Psoas muscle (tissue), 8 donors: ENCODE measurements at regions of chr11 and their contacts with region 1.

Region 1: GRCh38 chr11:30128269-30128932 is 102.4 kb upstream of the FSHB start:
- DNase-seq: no peak
- ATAC-seq: no peak
- H3K4me3 ChIP-seq: no peak overlapping the region
- H3K27ac ChIP-seq: no peak overlapping the region
- H3K4me1 ChIP-seq: no peaks in the 10 kb centered on the region
- H3K27me3 ChIP-seq: no peaks in the 10 kb centered on the region
- CTCF ChIP-seq: peak; percentile 40

Region 2: GRCh38 chr11:29780756-29781155 is 347.6 kb before region 1 on chr11:
- intact Hi-C with region 1: no loop called
- DNase-seq: no peak
- ATAC-seq: no peak
- H3K4me3 ChIP-seq: no peak overlapping the region
- H3K27ac ChIP-seq: no peak overlapping the region
- H3K4me1 ChIP-seq: no peaks in the 10 kb centered on the region
- H3K27me3 ChIP-seq: no peaks in the 10 kb centered on the region
- CTCF ChIP-seq: no peak

Region 3: GRCh38 chr11:30059172-30059815 is 69.1 kb before region 1 on chr11:
- intact Hi-C with region 1: no loop called
- DNase-seq: no peak
- ATAC-seq: no peak
- H3K4me3 ChIP-seq: no peak overlapping the region
- H3K27ac ChIP-seq: no peak overlapping the region
- H3K4me1 ChIP-seq: no peaks in the 10 kb centered on the region
- H3K27me3 ChIP-seq: no peaks in the 10 kb centered on the region
- CTCF ChIP-seq: no peak

Region 4: GRCh38 chr11:30917859-30918478 is 789.6 kb after region 1 on chr11:
- intact Hi-C with region 1: loop called in 1 of 2 experiments (anchors 10 kb)
- DNase-seq: no peak
- ATAC-seq: peak in 1 of 4 donors; percentile 63
- H3K4me3 ChIP-seq: no peak overlapping the region
- H3K27ac ChIP-seq: no peak overlapping the region
- H3K4me1 ChIP-seq: no peaks in the 10 kb centered on the region
- H3K27me3 ChIP-seq: peaks cover 0 to 4% (median 0%) of the 10 kb centered on the region in 3 donors
- CTCF ChIP-seq: peak; percentile 71